ENCODE measurements at regions of chr12 and their contacts with region 1.

Region 1: DNA sequence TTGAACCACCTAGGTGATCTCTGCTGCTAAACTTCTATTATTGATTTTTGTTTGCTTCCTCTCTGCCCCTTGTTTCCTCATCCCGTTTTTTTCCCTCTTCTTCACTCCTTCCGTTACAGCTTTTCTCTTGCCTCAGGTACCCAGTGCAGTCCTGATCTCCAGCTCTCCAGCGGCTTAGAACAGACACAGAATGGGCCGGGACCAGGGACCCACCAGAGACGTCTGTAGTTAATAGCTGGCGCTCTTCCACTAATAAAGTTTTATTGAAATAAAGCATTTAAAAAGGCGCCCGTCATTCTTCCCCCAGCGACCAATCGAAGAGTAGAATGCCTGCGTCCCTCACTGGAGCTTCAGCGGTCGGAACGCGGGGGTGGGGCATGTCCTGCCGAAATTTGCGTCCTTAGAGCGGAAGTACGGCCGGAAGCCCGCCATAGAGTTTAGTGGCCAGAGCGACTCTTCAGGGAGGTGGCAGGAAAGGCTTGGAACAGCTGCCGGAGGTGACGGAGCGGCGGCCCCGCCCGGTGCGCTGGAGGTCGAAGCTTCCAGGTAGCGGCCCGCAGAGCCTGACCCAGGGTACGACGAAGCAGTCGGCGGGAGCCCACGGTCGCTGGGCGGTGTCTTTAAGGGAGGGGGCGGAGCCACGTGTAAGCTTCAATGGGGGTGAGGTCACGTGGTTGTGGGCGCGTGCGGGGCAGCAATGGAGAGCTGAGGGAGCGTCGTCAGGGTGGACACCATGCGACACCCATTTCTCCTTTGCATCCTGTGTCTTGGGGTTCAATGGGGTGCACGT is at the start of gene COPS7A:
- DNase-seq: peak; percentile 97
- H3K27ac ChIP-seq: peak within 1 kb of the TSS; percentile 84
- CTCF ChIP-seq: no peak

Region 2: GRCh38 chr12:6688999-6689882 is 34.6 kb before region 1 on chr12 and contains the start of gene ZNF384:
- CTCF ChIA-PET with region 1: interaction called, 3 read pairs
- POLR2A ChIA-PET with region 1: interaction called, 13 read pairs
- DNase-seq: peak; percentile 95
- H3K27ac ChIP-seq: peak within 1 kb of the TSS; percentile 94
- CTCF ChIP-seq: no peak

Region 3: DNA sequence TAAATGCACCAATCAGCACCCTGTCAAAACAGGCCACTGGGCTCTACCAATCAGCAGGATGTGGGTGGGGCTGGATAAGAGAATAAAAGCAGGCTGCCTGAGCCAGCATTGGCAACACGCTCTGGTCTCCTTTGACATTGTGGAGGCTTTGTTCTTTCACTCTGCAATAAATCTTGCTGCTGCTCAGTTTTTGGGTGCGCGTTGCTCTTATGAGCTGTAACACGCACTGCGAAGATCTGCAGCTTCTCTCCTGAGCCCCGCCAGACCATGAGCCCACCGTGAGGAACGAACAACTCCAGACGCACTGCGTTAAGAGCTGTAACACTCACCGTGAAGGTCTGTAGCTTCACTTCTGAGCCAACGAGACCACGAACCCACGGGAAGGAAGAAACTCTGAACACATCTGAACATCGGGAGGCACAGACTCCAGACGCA is 14.8 kb before region 1 on chr12:
- CTCF ChIA-PET with region 1: no interaction called
- POLR2A ChIA-PET with region 1: no interaction called
- DNase-seq: no peak
- H3K27ac ChIP-seq: no peak overlapping the region
- CTCF ChIP-seq: no peak